OCI-LY7 (cell line): ENCODE measurements at regions of chr6 and their contacts with region 1.

Region 1: GRCh38 chr6:158819213-158819909 is at the start of gene EZR:
- DNase-seq: peak; percentile 95
- H3K4me3 ChIP-seq: peak within 1 kb of the TSS; percentile 87
- H3K27ac ChIP-seq: peak within 1 kb of the TSS; percentile 100
- H3K4me1 ChIP-seq: peaks cover 37% of the 10 kb centered on the region
- CTCF ChIP-seq: peak; percentile 32
- total RNA-seq, gene EZR: 268 and 360 TPM in 2 replicates

Region 2: GRCh38 chr6:158793432-158793831 is 25.9 kb before region 1 on chr6:
- CTCF ChIA-PET with region 1: interaction called, 7 read pairs
- POLR2A ChIA-PET with region 1: interaction called, 155 read pairs
- intact Hi-C with region 1: loop called (anchors 1 kb)
- DNase-seq: peak; percentile 69
- H3K4me3 ChIP-seq: peak overlapping the region; percentile 2
- H3K27ac ChIP-seq: peak overlapping the region; percentile 68
- H3K4me1 ChIP-seq: peaks cover 97% of the 10 kb centered on the region
- CTCF ChIP-seq: peak; percentile 85

Region 3: DNA sequence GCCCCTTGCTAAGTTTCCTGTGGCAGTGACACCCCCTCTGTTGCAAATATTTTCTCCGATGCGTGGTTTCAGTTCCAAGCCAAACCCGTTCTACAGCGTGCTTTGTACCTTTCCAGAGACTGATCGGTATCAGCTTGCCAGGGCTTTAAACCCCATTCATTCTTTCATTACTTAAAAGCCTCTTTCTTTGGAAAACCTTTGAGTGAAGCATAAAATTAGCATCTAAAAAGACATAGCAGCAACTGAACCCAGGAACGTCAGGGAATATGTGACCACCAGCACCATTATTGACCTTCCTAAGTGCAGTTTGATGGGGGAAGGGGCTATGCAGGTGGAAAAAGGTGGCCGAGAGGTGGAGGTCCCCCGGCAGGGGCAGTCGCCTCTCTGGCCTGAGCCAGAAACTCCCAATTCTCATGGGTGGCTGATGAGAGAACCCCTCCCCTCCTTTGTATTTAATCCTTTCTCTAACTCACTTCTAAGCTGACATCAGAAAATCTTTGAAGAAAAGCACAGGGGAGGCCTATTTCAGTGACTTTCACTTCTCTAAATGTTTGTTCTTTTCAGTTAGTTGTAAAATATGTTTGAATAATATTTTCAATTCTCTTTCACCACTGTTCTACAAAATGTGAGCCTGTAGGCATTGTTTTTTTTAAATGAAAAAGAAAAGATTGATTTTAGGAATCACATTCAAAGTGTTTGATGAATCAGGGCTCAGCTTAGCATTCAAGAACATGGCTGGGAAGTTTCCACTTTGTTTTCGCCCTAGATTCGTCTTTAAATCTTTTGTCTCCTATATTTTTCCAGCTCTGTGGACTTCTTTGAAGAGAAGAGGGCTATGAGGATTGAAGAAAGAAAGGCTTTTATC is 91.4 kb after region 1 on chr6:
- CTCF ChIA-PET with region 1: no interaction called
- POLR2A ChIA-PET with region 1: interaction called, 3 read pairs
- intact Hi-C with region 1: loop called (anchors 1 kb)
- DNase-seq: peak; percentile 90
- H3K4me3 ChIP-seq: peak overlapping the region; percentile 60
- H3K27ac ChIP-seq: peak overlapping the region; percentile 94
- H3K4me1 ChIP-seq: peaks cover 48% of the 10 kb centered on the region
- CTCF ChIP-seq: peak; percentile 52

Region 4: DNA sequence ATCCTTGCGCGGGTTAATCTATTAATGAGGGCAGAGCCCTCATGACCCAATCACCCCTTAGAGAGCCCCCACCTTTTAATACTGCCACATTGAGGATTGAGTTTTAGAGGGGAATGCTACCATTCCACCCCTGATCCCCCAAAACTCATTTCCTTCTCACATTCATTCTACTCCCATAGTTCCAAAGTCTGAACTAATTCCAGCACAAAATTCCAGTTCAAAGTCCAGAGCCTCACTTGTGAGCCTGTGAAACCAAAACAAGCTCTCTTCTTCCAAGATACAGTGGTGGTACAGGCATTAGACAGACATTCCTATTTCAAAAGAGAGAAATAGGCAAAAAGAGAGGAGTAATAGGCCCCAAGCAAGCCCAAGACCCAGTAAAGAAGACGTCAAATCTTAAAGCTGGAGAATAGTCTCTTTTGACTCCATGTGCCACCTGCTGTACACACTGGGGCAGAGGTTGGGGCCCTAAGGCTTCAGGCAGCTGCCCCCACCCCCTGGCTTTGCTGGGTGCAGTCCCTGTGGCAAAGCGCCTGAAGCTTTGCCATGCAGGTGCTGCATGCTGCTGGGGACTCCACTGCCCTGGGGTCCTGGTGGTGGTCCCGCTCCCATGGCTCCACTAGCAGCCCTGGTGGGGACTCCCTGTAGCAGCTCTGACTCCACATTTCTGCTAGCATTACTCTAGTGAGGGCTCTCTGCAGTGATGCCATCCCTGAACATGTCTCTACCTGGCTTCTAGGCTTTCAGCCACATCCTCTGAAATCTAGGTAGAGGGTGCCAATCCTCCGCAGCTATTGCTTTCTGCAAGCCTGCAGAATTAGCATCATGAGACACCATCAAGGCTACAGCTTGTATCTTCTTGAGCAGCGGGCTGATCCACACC is 139.4 kb after region 1 on chr6:
- CTCF ChIA-PET with region 1: no interaction called
- POLR2A ChIA-PET with region 1: no interaction called
- intact Hi-C with region 1: loop called (anchors 2 kb)
- DNase-seq: peak; percentile 69
- H3K4me3 ChIP-seq: no peak overlapping the region
- H3K27ac ChIP-seq: no peak overlapping the region
- H3K4me1 ChIP-seq: peaks cover 26% of the 10 kb centered on the region
- CTCF ChIP-seq: peak; percentile 77

Region 5: DNA sequence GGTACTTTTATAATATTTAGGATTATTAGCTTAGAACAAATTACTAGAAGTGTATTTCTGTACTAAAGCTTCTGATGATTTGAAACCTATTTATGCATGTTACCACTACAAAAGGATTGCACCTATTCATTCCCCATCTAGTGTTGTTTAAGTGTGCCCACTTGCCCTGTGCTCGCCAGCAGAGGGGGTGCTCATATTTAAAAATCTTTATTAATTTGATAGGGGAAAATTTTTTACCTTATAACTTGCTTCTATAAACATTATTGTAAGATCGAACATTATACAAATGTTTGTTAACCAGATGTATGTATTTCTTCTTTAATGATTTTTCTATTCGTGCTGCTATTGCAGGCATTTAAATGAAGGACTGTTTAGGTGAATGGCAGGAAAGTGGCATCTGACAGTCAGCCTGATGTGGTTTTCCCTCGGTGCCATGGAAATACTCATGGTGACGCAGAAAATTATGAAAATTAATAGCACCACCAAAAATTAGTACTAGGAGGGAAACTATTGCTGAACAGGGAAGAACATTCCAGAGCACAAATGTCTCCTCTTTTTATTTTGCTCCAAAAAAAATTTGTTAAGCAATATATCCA is 305.8 kb after region 1 on chr6:
- CTCF ChIA-PET with region 1: no interaction called
- POLR2A ChIA-PET with region 1: no interaction called
- intact Hi-C with region 1: loop called (anchors 5 kb)
- DNase-seq: peak; percentile 52
- H3K4me3 ChIP-seq: no peak overlapping the region
- H3K27ac ChIP-seq: peak overlapping the region; percentile 89
- H3K4me1 ChIP-seq: peaks cover 72% of the 10 kb centered on the region
- CTCF ChIP-seq: peak; percentile 95